B cell (primary cell): ENCODE measurements at regions of chr2 and their contacts with region 1.

Region 1: DNA sequence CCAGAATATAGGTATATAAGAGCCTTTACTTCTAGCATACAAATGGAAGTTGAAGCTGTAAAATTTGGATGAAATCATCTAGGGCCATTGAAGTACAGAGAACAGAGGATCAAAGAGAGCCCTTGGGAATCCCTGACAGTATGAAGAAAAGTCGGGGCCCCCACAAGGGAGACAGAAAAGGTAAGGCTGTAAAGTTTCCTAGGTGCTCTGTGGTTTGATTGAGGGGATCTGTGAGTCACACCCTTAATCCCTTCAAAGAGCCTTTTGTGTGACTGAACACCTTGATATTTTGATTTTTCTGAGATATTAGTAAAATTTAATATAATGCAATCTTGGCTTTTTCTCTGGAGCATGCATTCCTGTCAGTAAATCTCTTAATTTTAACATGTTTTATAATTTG is 961.7 kb upstream of the TMEFF2 start:
- DNase-seq: no peak
- ATAC-seq: no peak
- H3K4me3 ChIP-seq: no peak overlapping the region
- H3K4me3 Mint-ChIP-seq: no peak overlapping the region
- H3K27ac ChIP-seq: no peak overlapping the region
- H3K27ac Mint-ChIP-seq: no peak overlapping the region
- H3K4me1 ChIP-seq: no peaks in the 10 kb centered on the region
- H3K4me1 Mint-ChIP-seq: no peaks in the 10 kb centered on the region
- H3K27me3 ChIP-seq: no peaks in the 10 kb centered on the region
- H3K27me3 Mint-ChIP-seq: no peaks in the 10 kb centered on the region
- CTCF ChIP-seq: no peak

Region 2: DNA sequence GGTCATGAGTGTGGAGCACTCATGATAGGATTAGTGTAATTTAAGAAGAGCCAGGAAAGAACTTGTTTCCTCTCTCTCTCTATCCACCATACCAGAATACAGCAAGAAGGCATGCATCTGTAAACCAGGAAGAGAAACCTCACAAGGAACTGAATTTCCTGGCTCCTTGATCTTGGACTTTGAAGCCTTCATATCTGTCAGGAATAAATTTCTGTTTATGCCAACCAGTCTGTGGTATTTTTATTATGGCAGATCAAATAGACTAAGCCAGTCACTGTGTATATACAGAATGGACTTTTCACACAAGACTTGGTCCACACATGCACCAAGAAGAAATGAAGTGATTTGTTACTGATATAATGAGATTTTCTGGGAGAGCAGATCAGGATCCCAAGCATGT is 31.7 kb before region 1 on chr2:
- CTCF ChIA-PET with region 1: no interaction called
- POLR2A ChIA-PET with region 1: no interaction called
- intact Hi-C with region 1: loop called (anchors 5 kb)
- DNase-seq: no peak
- ATAC-seq: no peak
- H3K4me3 ChIP-seq: no peak overlapping the region
- H3K4me3 Mint-ChIP-seq: no peak overlapping the region
- H3K27ac ChIP-seq: no peak overlapping the region
- H3K27ac Mint-ChIP-seq: no peak overlapping the region
- H3K4me1 ChIP-seq: no peaks in the 10 kb centered on the region
- H3K4me1 Mint-ChIP-seq: no peaks in the 10 kb centered on the region
- H3K27me3 ChIP-seq: no peaks in the 10 kb centered on the region
- H3K27me3 Mint-ChIP-seq: no peaks in the 10 kb centered on the region
- CTCF ChIP-seq: no peak

Region 3: DNA sequence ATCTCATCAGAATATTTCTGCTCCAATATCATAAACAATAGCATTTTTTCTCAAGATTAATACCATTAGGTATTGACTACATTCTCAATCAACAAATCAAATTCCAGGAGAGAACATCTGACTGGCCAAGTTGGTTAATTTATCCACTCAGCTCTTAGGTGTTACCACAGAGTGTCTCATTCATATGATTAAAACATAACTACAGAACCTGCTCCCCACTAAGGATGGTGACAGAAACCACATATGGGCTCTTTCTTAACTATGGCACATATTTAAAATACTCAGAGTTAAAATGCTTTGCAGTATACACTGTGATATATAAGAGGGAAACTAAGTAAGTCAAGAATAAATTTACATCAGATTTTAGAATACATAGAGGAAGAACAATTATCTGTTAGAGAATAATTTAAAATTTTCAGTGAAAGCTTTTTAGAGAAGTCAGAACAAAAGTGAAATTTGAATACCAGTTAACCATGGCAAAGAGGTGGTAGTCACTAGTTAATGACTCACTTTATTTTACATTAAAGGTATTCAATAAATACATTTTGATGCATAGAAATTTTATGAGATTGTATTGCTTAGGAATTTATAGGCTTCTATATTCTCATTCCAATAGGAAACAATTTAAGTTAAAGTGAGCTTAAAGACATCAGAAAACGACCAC is 159.1 kb after region 1 on chr2:
- CTCF ChIA-PET with region 1: no interaction called
- POLR2A ChIA-PET with region 1: no interaction called
- intact Hi-C with region 1: no loop called
- DNase-seq: no peak
- ATAC-seq: no peak
- H3K4me3 ChIP-seq: no peak overlapping the region
- H3K4me3 Mint-ChIP-seq: no peak overlapping the region
- H3K27ac ChIP-seq: peak overlapping the region in 1 of 2 donors; percentile 4
- H3K27ac Mint-ChIP-seq: no peak overlapping the region
- H3K4me1 ChIP-seq: peaks cover 0 to 10% of the 10 kb centered on the region in 2 donors
- H3K4me1 Mint-ChIP-seq: peaks cover 13% of the 10 kb centered on the region
- H3K27me3 ChIP-seq: no peaks in the 10 kb centered on the region
- H3K27me3 Mint-ChIP-seq: no peaks in the 10 kb centered on the region
- CTCF ChIP-seq: no peak